Psoas muscle (tissue), 8 donors: ENCODE measurements at regions of chr5 and their contacts with region 1.

Region 1: GRCh38 chr5:138569759-138570158 is 5.4 kb downstream of the HSPA9 start:
- DNase-seq: no peak
- ATAC-seq: peak in 3 of 4 donors; percentile 28 to 42 (median 37)
- H3K4me3 ChIP-seq: no peak overlapping the region
- H3K27ac ChIP-seq: peak overlapping the region; percentile 30
- H3K4me1 ChIP-seq: peaks cover 36% of the 10 kb centered on the region
- H3K27me3 ChIP-seq: no peaks in the 10 kb centered on the region
- CTCF ChIP-seq: no peak

Region 2: DNA sequence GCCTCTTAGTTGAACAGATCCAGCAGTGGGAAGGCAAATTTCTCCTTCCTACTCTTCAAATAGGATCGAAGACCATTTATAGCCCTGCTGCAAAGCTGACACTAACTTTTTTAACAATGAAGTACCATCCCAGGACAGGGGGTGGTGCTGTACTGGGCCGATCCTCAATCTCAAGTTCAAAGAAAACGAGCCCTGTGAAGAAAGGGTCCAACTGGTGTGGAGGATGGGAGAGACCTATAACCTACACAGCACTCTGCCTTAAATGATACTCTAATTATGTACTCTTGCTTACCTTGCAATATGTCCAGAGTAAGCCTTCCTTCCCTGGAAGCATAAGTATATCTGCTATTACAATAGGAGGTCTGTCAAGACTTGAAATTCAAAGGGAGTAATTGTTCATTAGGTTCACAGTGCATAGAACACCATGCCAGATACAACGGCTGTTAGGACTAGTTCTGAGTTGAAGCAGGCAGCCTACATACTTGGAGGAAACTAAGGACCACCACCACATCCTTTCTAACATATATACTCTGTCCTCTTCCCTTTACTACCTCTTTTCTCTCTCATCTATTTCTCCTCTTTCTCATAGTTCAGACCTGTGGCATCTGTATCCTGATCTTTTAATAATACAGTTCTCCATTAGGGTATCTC is 33.0 kb before region 1 on chr5:
- intact Hi-C with region 1: loop called in 1 of 2 experiments (anchors 1 kb)
- DNase-seq: no peak
- ATAC-seq: peak; percentile 34 to 52 (median 46)
- H3K4me3 ChIP-seq: no peak overlapping the region
- H3K27ac ChIP-seq: no peak overlapping the region
- H3K4me1 ChIP-seq: peaks cover 58% of the 10 kb centered on the region
- H3K27me3 ChIP-seq: no peaks in the 10 kb centered on the region
- CTCF ChIP-seq: peak; percentile 26